Activated CD4-positive, alpha-beta memory T cell treated with anti-CD3 and anti-CD28 coated beads for 36 hours (primary cell): ENCODE measurements at regions of chr3 and their contacts with region 1.

Region 1: GRCh38 chr3:39541917-39542329 is 74.4 kb downstream of the MOBP start:
- DNase-seq: no peak
- H3K4me3 Mint-ChIP-seq: no peak overlapping the region
- H3K27ac Mint-ChIP-seq: no peak overlapping the region
- H3K4me1 Mint-ChIP-seq: peaks cover 6% of the 10 kb centered on the region
- H3K27me3 Mint-ChIP-seq: peaks cover 7% of the 10 kb centered on the region

Region 2: DNA sequence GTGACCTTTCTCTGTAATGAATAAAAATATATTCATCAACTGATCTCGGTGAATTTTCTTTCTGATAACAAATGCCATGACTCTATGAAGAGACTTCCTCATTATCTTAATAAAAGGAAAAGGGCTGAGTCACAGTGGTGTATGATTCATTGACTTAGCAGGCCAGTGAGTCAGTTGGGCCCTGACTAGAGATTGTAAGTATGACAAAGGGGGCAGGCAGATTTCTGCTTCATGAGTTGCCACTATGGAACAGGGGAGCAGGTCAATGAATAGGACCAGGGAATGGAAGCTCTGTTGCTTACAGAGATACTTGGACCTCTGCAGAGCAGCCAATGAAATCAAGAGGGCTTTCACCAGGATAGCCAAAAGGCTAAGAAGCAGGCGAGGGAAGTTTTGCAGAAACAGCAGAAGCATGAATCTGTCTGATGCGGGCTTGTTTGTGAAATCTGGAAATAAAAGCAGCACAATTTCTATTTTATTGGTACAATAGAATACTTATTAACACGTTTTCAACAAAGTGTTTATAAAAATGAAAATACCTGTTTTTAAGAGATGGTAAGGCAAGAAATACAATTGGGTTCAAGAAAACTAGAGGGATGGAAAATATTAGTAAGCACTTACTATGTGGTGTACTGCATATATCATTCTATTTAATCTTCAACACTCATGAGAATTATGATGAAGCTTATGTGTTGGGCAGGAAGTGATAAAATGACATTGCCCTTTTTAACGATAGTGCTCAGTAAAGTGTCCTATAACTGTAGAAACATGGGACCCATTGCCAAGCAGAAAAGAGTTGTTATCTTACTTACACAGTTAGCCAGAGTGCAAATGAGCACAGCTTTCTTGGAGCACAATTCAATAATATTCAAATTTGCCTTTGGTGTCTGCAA is 97.7 kb after region 1 on chr3:
- CTCF ChIA-PET with region 1: no interaction called
- POLR2A ChIA-PET with region 1: no interaction called
- intact Hi-C with region 1: loop called (anchors 1 kb)
- DNase-seq: peak; percentile 44
- H3K4me3 Mint-ChIP-seq: no peak overlapping the region
- H3K27ac Mint-ChIP-seq: no peak overlapping the region
- H3K4me1 Mint-ChIP-seq: peaks cover 10% of the 10 kb centered on the region
- H3K27me3 Mint-ChIP-seq: peaks cover 9% of the 10 kb centered on the region

Region 3: GRCh38 chr3:39665441-39665840 is 123.5 kb after region 1 on chr3:
- CTCF ChIA-PET with region 1: no interaction called
- POLR2A ChIA-PET with region 1: no interaction called
- intact Hi-C with region 1: no loop called
- DNase-seq: no peak
- H3K4me3 Mint-ChIP-seq: no peak overlapping the region
- H3K27ac Mint-ChIP-seq: no peak overlapping the region
- H3K4me1 Mint-ChIP-seq: no peaks in the 10 kb centered on the region
- H3K27me3 Mint-ChIP-seq: peaks cover 3% of the 10 kb centered on the region

Region 4: GRCh38 chr3:40191850-40192448 is 650.0 kb after region 1 on chr3:
- CTCF ChIA-PET with region 1: no interaction called
- POLR2A ChIA-PET with region 1: no interaction called
- intact Hi-C with region 1: no loop called
- DNase-seq: peak; percentile 66
- H3K4me3 Mint-ChIP-seq: no peak overlapping the region
- H3K27ac Mint-ChIP-seq: no peak overlapping the region
- H3K4me1 Mint-ChIP-seq: no peaks in the 10 kb centered on the region
- H3K27me3 Mint-ChIP-seq: no peaks in the 10 kb centered on the region